SK-N-SH (cell line): ENCODE measurements at regions of chr11 and their contacts with region 1.

Region 1: GRCh38 chr11:61429691-61430582 is at the starts of genes CPSF7 and SDHAF2:
- DNase-seq: peak; percentile 96
- H3K4me3 ChIP-seq: peak within 1 kb of the TSS; percentile 87 to 95
- H3K27ac ChIP-seq: peak within 1 kb of the TSS; percentile 93 to 96
- H3K4me1 ChIP-seq: peaks cover 9 to 14% of the 10 kb centered on the region in 2 experiments
- H3K27me3 ChIP-seq: no peaks in the 10 kb centered on the region
- CTCF ChIP-seq: no peak
- EP300 ChIP-seq: no peak
- RAD21 ChIP-seq: no peak
- polyA plus RNA-seq, gene CPSF7: 44.0 and 49.4 TPM in 2 replicates
- polyA plus RNA-seq, gene SDHAF2: 81.7 and 116 TPM in 2 replicates

Region 2: GRCh38 chr11:61361686-61362541 is 68.0 kb before region 1 on chr11 and contains the starts of genes CYB561A3 and TMEM138:
- CTCF ChIA-PET with region 1: interaction called, 6 read pairs
- POLR2A ChIA-PET with region 1: interaction called, 12 read pairs
- DNase-seq: peak; percentile 93
- H3K4me3 ChIP-seq: peak within 1 kb of the TSS; percentile 68 to 71
- H3K27ac ChIP-seq: peak within 1 kb of the TSS; percentile 98 to 99
- H3K4me1 ChIP-seq: peaks cover 9 to 14% of the 10 kb centered on the region in 2 experiments; a peak in 3 of 4 replicates
- H3K27me3 ChIP-seq: no peaks in the 10 kb centered on the region
- CTCF ChIP-seq: no peak
- EP300 ChIP-seq: no peak
- RAD21 ChIP-seq: no peak
- polyA plus RNA-seq, gene CYB561A3: 70.0 and 76.4 TPM in 2 replicates
- polyA plus RNA-seq, gene TMEM138: 82.2 and 129 TPM in 2 replicates

Region 3: GRCh38 chr11:61392981-61393595 is 36.8 kb before region 1 on chr11:
- CTCF ChIA-PET with region 1: interaction called, 14 read pairs
- POLR2A ChIA-PET with region 1: interaction called, 10 read pairs
- DNase-seq: peak; percentile 52
- H3K4me3 ChIP-seq: peak overlapping the region; percentile 63 to 70
- H3K27ac ChIP-seq: no peak overlapping the region
- H3K4me1 ChIP-seq: peaks cover 0 to 6% of the 10 kb centered on the region in 2 experiments; a peak in 2 of 4 replicates
- H3K27me3 ChIP-seq: no peaks in the 10 kb centered on the region
- CTCF ChIP-seq: peak; percentile 28
- EP300 ChIP-seq: no peak
- RAD21 ChIP-seq: peak; percentile 52

Region 4: DNA sequence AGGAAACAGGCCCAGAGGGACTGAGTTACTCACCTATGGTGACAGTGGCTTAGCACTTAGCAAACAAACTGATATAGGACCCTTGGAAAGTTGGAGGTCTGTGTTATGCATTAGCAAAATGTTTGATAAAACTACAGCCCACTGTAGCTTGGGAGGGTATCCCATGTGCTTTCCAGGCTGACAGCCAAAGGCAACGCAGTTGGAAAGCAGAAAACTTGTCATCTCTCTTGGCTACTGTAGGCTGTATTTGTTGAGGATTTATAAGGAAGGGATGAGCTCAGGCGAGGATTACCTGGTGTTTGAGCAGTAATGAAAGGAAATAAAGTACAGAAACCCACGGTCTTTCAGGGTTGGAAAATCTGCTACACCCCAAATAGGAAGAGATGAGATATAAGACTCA is 23.8 kb after region 1 on chr11:
- CTCF ChIA-PET with region 1: interaction called, 109 read pairs
- POLR2A ChIA-PET with region 1: no interaction called
- DNase-seq: no peak
- H3K4me3 ChIP-seq: no peak overlapping the region
- H3K27ac ChIP-seq: no peak overlapping the region
- H3K4me1 ChIP-seq: peaks cover 0 to 4% of the 10 kb centered on the region in 2 experiments; a peak in 1 of 4 replicates
- H3K27me3 ChIP-seq: no peaks in the 10 kb centered on the region
- CTCF ChIP-seq: no peak
- EP300 ChIP-seq: no peak
- RAD21 ChIP-seq: no peak

Region 5: DNA sequence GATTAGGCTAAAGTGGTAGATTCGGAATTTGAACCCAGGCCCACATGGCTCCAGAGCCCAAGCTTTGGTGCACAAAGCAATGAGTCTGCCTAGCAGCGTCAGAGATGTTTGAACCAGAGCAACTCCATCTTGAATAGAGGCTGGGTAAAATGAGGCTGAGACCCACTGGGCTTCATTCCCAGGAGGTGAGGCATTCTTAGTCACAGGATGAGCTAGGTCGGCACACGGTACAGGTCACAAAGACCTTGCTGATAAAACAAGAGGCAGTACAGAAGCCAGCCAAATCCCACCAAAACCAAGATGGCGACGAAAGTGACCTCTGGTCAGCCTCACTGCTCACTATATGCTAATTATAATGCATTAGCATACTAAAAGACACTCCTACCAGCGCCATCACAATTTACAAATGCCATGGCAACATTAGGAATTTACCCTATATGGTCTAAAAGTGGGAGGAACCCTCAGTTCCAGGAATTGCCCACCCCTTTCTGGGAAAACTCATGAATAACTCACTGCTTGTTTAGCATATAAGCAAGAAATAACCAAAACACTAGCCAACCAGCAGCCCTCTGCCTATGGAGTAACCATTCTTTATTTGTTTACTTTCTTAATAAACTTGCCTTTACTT is 210.0 kb after region 1 on chr11:
- CTCF ChIA-PET with region 1: interaction called, 20 read pairs
- POLR2A ChIA-PET with region 1: interaction called, 3 read pairs
- DNase-seq: no peak
- H3K4me3 ChIP-seq: no peak overlapping the region
- H3K27ac ChIP-seq: no peak overlapping the region
- H3K4me1 ChIP-seq: peaks cover 0 to 2% of the 10 kb centered on the region in 2 experiments; a peak in 1 of 4 replicates
- H3K27me3 ChIP-seq: no peaks in the 10 kb centered on the region; the same call in 1 of the 2 replicates
- CTCF ChIP-seq: no peak
- EP300 ChIP-seq: no peak
- RAD21 ChIP-seq: no peak